Activated CD8-positive, alpha-beta memory T cell treated with anti-CD3 and anti-CD28 coated beads, Interleukin-2, amount 10 ng/mL, durations not matched to agents 7 days and 5 days (primary cell): ENCODE measurements at regions of chr3 and their contacts with region 1.

Region 1: DNA sequence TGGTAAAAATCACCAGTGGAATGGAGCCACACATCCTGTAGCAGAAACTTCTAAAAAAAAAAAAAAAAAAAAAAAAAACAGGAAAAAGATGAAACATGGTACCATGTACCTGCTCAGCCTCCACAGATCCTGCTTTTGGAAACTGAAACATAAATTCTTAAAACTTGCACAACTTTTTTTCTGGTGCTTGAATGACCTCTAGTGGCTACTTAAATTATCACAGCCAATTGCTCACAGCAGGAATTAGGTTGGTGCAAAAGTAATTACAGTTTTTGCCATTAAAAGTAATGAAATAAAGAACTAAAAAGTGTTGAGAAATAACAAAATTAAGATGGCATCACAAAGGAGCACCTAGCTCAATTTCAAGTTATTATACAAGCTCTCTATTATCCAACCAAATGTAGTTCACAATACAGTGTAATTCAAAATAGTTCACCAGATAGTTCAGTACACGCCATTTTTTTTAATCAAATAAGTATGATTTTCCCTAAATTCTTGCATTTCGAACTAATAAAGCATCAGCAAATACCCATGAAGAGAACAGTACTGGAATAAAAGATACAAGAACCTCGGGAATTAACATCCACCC is 80.6 kb downstream of the ULK4 start:
- DNase-seq: no peak
- ATAC-seq: no peak
- H3K4me3 Mint-ChIP-seq: no peak overlapping the region
- H3K27ac Mint-ChIP-seq: no peak overlapping the region
- H3K4me1 Mint-ChIP-seq: no peaks in the 10 kb centered on the region
- H3K27me3 Mint-ChIP-seq: no peaks in the 10 kb centered on the region

Region 2: DNA sequence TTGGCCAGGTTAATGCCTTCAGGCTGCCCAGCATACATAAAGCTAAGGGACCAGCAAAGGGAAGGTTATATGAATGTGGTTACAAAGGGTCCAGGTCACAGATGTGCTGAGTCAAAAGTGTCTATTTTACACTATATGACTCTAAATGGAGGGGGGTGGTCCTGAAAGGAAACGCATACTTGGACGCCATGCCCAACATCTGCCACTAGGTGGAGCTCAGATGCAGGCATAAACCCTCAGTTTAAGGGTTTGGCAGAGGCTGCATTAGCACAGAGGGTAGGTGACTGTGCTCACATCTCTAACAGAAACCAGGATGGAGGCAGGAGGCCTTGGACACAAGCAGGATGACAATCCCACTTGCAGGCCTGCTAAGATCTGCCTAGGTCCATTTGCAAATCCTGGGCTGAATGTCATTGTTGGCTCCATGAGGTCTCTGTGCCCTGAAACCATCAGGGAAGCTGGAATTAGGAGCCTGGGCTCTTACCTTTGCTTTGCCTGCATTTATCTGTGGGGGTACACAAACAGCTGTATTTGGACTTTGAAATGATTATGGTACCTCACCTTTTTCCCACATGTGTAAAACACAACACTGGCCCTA is 1300.7 kb before region 1 on chr3:
- CTCF ChIA-PET with region 1: interaction called, 13 read pairs
- DNase-seq: peak; percentile 73
- ATAC-seq: peak; percentile 73
- H3K4me3 Mint-ChIP-seq: no peak overlapping the region
- H3K27ac Mint-ChIP-seq: no peak overlapping the region
- H3K4me1 Mint-ChIP-seq: no peaks in the 10 kb centered on the region
- H3K27me3 Mint-ChIP-seq: peaks cover 7% of the 10 kb centered on the region